A549 (cell line): ENCODE measurements at regions of chr1 and their contacts with region 1.

Region 1: GRCh38 chr1:181142096-181142958 is 53.8 kb downstream of the IER5 start:
- DNase-seq: peak; percentile 81 to 92
- ATAC-seq: peak; percentile 89 to 96
- H3K4me3 ChIP-seq: peak overlapping the region; percentile 19
- H3K27ac ChIP-seq: peak overlapping the region; percentile 77 to 92
- H3K4me1 ChIP-seq: peaks cover 36% of the 10 kb centered on the region
- CTCF ChIP-seq: peak; percentile 96
- EP300 ChIP-seq: no peak
- POLR2A ChIP-seq: no peak
- RAD21 ChIP-seq: peak; percentile 100

Region 2: DNA sequence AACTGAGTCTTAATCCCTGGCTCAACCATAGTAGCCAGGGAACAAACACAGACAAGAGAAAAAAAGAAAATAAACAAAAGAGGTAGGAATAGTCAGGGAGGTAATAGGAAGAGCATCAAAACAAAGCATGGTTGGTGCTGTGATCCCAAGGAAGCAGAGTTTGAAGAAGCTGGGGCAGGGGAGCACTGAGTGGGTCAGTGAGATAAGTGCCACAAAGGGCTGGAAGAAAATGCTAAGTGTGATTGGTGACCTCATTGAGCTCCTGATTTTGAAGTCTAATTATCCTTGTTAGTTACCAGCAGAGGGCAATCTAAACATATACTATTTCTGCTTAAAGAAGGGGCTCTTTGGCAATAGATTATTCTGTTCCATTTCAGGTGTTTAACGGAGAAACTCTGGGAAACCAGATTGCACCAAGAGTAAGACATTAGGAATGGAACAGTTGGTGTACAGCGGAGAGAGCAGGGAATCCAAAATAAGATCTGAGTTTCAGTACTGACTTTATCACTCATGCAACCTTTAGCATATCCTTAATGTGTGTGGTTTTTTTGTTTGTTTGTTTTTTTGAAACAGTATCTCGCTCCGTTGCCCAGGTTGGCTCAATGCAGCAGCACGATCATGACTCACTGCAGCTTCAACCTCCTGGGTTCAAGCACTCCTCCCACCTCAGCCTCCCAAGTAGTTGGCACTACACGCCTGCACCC is 260.4 kb before region 1 on chr1:
- CTCF ChIA-PET with region 1: interaction called, 147 read pairs
- POLR2A ChIA-PET with region 1: no interaction called
- DNase-seq: peak; percentile 49 to 51
- ATAC-seq: peak; percentile 84 to 85
- H3K4me3 ChIP-seq: no peak overlapping the region
- H3K27ac ChIP-seq: no peak overlapping the region
- H3K4me1 ChIP-seq: peaks cover 14% of the 10 kb centered on the region; the same call in 2 of the 3 replicates
- CTCF ChIP-seq: peak; percentile 76
- EP300 ChIP-seq: no peak
- POLR2A ChIP-seq: no peak
- RAD21 ChIP-seq: peak; percentile 78 to 79

Region 3: DNA sequence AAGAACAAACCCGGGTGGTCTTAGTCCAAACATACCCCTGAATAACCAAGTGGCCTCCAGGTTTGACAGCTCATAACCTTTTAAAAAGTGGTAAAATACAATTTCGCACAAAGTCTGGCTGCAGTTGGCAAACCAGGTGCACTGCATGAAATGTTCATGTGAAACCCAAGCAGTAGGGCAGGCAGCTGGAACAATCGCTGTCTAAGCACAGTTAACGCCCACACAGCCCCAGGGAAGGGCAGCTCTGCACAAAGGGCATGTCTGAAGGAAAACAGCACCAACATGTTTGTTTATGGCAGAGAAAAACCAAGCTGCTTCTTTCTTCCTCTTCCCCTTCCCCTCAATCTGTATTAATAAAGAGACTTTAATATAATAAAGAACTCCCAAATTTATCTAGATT is 180.1 kb before region 1 on chr1:
- CTCF ChIA-PET with region 1: interaction called, 10 read pairs
- POLR2A ChIA-PET with region 1: no interaction called
- DNase-seq: no peak
- ATAC-seq: no peak
- H3K4me3 ChIP-seq: no peak overlapping the region
- H3K27ac ChIP-seq: no peak overlapping the region
- H3K4me1 ChIP-seq: no peaks in the 10 kb centered on the region
- CTCF ChIP-seq: no peak
- EP300 ChIP-seq: no peak
- POLR2A ChIP-seq: no peak
- RAD21 ChIP-seq: no peak

Region 4: GRCh38 chr1:180997843-180998504 is 144.4 kb before region 1 on chr1:
- CTCF ChIA-PET with region 1: interaction called, 19 read pairs
- POLR2A ChIA-PET with region 1: no interaction called
- DNase-seq: no peak
- ATAC-seq: no peak
- H3K4me3 ChIP-seq: no peak overlapping the region
- H3K27ac ChIP-seq: no peak overlapping the region
- H3K4me1 ChIP-seq: no peaks in the 10 kb centered on the region
- CTCF ChIP-seq: no peak
- EP300 ChIP-seq: no peak
- POLR2A ChIP-seq: no peak
- RAD21 ChIP-seq: no peak

Region 5: DNA sequence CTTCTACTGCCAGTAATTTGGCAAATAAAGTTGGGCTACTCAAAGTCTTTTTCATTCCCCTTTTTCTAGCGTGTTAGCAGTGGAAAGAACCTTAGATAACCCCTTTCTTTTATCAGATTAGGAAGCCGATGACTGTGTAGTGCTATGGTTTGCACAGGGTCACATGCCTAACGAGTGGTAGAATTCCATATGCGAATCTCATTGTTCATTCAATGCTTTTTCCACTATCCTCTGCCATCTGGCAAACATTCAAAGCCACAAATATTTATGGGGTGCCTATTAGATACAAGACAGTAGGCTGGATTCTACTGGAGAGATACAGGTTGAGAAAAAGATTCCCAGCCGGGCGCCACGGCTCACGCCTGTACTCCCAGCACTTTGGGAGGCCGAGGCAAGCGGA is 68.7 kb before region 1 on chr1:
- CTCF ChIA-PET with region 1: interaction called, 41 read pairs
- POLR2A ChIA-PET with region 1: interaction called, 3 read pairs
- DNase-seq: peak; percentile 69 to 88
- ATAC-seq: peak; percentile 68 to 78
- H3K4me3 ChIP-seq: no peak overlapping the region
- H3K27ac ChIP-seq: peak overlapping the region; percentile 64 to 87; a peak in 5 of 6 replicates
- H3K4me1 ChIP-seq: peaks cover 55% of the 10 kb centered on the region
- CTCF ChIP-seq: no peak
- EP300 ChIP-seq: peak; percentile 64 to 83; a peak in 2 of 5 replicates
- POLR2A ChIP-seq: no peak
- RAD21 ChIP-seq: peak; percentile 1 to 17; a peak in 2 of 5 replicates

Region 6: GRCh38 chr1:181152892-181153633 is 10.7 kb after region 1 on chr1:
- CTCF ChIA-PET with region 1: interaction called, 40 read pairs
- POLR2A ChIA-PET with region 1: no interaction called
- DNase-seq: no peak
- ATAC-seq: peak in 1 of 2 experiments; percentile 36; a peak in 3 of 6 replicates
- H3K4me3 ChIP-seq: no peak overlapping the region
- H3K27ac ChIP-seq: no peak overlapping the region
- H3K4me1 ChIP-seq: no peaks in the 10 kb centered on the region; the same call in 2 of the 3 replicates
- CTCF ChIP-seq: no peak
- EP300 ChIP-seq: no peak
- POLR2A ChIP-seq: no peak
- RAD21 ChIP-seq: no peak